G401 (cell line): ENCODE measurements at regions of chr2 and their contacts with region 1.

Region 1: GRCh38 chr2:23954325-23955014 is 14.2 kb downstream of the UBXN2A start:
- DNase-seq: no peak

Region 2: GRCh38 chr2:23824777-23825212 is 129.7 kb before region 1 on chr2:
- in situ Hi-C with region 1: no loop called
- DNase-seq: peak; percentile 60

Region 3: GRCh38 chr2:23900927-23901322 is 53.5 kb before region 1 on chr2:
- in situ Hi-C with region 1: loop called (anchors 5 kb)
- DNase-seq: peak; percentile 16